ENCODE measurements at regions of chr2 and their contacts with region 1.

Region 1: DNA sequence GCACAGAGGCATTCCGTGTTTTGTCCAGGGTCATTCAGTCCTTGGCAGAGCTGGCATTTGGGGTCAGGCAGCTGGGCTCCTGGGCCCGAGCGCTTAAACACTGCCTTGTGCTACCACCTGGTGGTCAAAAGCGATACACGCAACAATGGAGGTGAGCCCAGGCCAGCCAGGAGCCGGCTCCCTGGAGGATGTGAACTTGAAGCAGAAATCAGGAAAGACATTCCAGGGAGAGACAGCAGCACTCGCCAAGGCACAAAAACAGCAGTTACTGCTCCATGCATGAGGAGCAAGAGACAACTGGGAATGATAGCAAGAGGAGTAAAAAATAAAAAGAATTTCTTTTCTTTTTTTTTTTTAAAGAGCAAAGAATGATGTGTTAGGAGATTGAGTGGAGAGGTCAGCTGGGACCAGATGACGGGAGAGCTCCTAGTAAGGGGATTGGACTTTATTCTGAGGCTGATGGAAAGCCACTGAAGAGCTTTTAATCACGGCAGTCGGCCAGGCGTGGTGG is 20.7 kb downstream of the SCYGR8 start:
- DNase-seq: peak; percentile 21 to 73 (median 59)
- ATAC-seq: peak; percentile 64
- H3K4me3 ChIP-seq: no peak overlapping the region
- H3K4me3 Mint-ChIP-seq: no peak overlapping the region
- H3K27ac ChIP-seq: no peak overlapping the region
- H3K27ac Mint-ChIP-seq: no peak overlapping the region
- H3K4me1 ChIP-seq: no peaks in the 10 kb centered on the region
- H3K4me1 Mint-ChIP-seq: no peaks in the 10 kb centered on the region
- H3K27me3 ChIP-seq: no peaks in the 10 kb centered on the region
- H3K27me3 Mint-ChIP-seq: peaks cover 3% of the 10 kb centered on the region
- CTCF ChIP-seq: peak; percentile 75

Region 2: DNA sequence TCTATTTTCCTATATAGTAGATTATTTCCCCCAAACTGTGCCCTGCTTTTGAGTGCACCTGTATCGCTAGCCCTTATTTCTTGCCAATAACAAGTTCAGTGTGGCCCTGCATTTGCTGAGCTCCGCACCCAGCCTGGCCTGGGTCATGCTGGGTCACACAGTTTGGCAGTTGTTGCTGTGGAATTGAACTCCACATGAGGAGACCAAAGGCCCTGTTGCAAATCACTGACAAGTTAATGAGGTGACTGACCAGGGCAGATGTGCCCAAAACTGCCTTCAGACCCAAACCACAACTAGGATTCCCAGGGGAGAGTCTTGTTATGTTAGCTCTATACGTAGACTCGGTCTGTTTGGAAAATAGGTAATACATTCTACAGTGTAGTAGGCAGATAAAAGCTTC is 633.4 kb before region 1 on chr2:
- CTCF ChIA-PET with region 1: interaction called, 5 read pairs
- POLR2A ChIA-PET with region 1: no interaction called
- intact Hi-C with region 1: loop called in 1 of 2 experiments (anchors 1 kb)
- DNase-seq: no peak
- ATAC-seq: no peak
- H3K4me3 ChIP-seq: no peak overlapping the region
- H3K4me3 Mint-ChIP-seq: no peak overlapping the region
- H3K27ac ChIP-seq: no peak overlapping the region
- H3K27ac Mint-ChIP-seq: no peak overlapping the region
- H3K4me1 ChIP-seq: no peaks in the 10 kb centered on the region
- H3K4me1 Mint-ChIP-seq: no peaks in the 10 kb centered on the region
- H3K27me3 ChIP-seq: no peaks in the 10 kb centered on the region
- H3K27me3 Mint-ChIP-seq: peaks cover 17% of the 10 kb centered on the region
- CTCF ChIP-seq: no peak

Region 3: DNA sequence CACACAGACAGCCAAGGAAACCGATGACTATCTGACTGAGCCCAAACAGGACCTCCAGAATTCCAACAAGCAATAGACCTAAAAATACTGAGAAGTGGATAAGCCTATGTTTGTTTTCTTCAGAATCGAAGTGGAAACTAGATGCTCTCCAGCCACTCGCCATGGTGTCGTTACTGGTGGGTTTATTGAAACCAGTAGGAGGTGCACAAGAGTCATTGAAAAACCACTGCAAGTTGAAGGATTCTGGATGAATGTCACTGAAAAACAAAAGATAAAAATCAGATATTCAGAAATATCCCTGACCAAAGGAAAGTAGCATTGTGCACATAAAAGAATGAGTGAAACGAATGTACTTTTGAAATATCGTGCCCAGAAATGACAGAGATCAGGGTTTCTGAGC is 402.7 kb before region 1 on chr2:
- CTCF ChIA-PET with region 1: interaction called, 6 read pairs
- POLR2A ChIA-PET with region 1: no interaction called
- intact Hi-C with region 1: loop called (anchors 1 to 5 kb)
- DNase-seq: peak in 2 of 9 experiments; percentile 14 to 43
- ATAC-seq: no peak
- H3K4me3 ChIP-seq: no peak overlapping the region
- H3K4me3 Mint-ChIP-seq: no peak overlapping the region
- H3K27ac ChIP-seq: no peak overlapping the region
- H3K27ac Mint-ChIP-seq: no peak overlapping the region
- H3K4me1 ChIP-seq: no peaks in the 10 kb centered on the region
- H3K4me1 Mint-ChIP-seq: no peaks in the 10 kb centered on the region
- H3K27me3 ChIP-seq: no peaks in the 10 kb centered on the region
- H3K27me3 Mint-ChIP-seq: no peaks in the 10 kb centered on the region
- CTCF ChIP-seq: no peak

Region 4: DNA sequence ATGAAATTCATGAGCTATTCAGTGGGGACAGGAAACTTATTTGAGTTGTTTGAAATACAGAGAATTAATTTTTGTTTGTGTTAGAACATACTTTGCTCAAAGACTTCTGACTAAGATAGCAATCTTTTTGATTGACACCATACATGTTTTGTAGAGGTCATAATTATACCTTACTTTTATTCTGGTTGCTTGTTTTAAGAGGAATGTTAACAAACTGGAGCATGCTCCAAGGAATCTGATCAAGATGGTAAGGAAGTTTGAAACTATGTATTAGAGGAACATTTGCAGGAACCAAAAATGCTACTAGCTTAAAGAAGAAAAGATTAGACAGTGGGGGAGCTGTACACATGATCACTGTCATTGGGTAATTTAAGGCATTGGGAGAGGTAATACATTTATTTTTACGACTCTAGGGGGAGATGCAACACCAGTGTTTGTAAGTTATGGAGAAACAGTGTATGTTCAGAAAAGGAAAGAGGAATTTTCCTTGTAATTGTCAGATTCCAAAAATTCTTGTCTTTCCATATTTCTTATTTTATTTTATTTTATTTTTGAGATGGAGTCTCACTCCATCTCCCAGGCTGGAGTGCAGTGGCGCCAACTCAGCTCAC is 286.5 kb before region 1 on chr2:
- CTCF ChIA-PET with region 1: interaction called, 4 read pairs
- POLR2A ChIA-PET with region 1: no interaction called
- intact Hi-C with region 1: loop called in 1 of 2 experiments (anchors 5 kb)
- DNase-seq: peak in 2 of 9 experiments; percentile 30 to 53
- ATAC-seq: peak; percentile 74
- H3K4me3 ChIP-seq: no peak overlapping the region
- H3K4me3 Mint-ChIP-seq: peak overlapping the region; percentile 3
- H3K27ac ChIP-seq: no peak overlapping the region
- H3K27ac Mint-ChIP-seq: peak overlapping the region; percentile 2
- H3K4me1 ChIP-seq: peaks cover 49% of the 10 kb centered on the region
- H3K4me1 Mint-ChIP-seq: peaks cover 71% of the 10 kb centered on the region
- H3K27me3 ChIP-seq: no peaks in the 10 kb centered on the region
- H3K27me3 Mint-ChIP-seq: no peaks in the 10 kb centered on the region
- CTCF ChIP-seq: no peak

Region 5: DNA sequence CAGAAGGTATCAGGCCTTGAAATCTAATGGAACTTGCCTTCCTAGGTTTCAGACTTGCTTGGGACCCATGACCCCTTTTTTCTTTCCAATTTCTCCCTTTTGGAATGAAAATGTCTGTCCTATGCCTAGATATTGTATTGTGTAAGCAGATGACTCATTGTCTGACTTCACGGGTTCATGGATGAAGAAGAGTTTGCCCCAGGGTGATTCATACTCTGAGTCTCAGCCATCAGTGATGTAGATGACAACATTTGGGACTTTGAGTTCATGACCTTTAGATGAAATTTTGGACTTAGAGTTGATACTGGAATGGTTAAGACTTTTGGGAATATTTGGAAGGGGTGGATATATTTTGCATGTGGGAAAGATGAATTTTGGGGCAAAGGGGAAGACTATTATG is 111.0 kb before region 1 on chr2:
- CTCF ChIA-PET with region 1: no interaction called
- POLR2A ChIA-PET with region 1: no interaction called
- intact Hi-C with region 1: loop called in 1 of 2 experiments (anchors 5 kb)
- DNase-seq: peak in 1 of 9 experiments; percentile 2
- ATAC-seq: no peak
- H3K4me3 ChIP-seq: no peak overlapping the region
- H3K4me3 Mint-ChIP-seq: no peak overlapping the region
- H3K27ac ChIP-seq: no peak overlapping the region
- H3K27ac Mint-ChIP-seq: no peak overlapping the region
- H3K4me1 ChIP-seq: no peaks in the 10 kb centered on the region
- H3K4me1 Mint-ChIP-seq: no peaks in the 10 kb centered on the region
- H3K27me3 ChIP-seq: no peaks in the 10 kb centered on the region
- H3K27me3 Mint-ChIP-seq: no peaks in the 10 kb centered on the region
- CTCF ChIP-seq: no peak